ENCODE measurements at regions of chr7 and their contacts with region 1.

Region 1: DNA sequence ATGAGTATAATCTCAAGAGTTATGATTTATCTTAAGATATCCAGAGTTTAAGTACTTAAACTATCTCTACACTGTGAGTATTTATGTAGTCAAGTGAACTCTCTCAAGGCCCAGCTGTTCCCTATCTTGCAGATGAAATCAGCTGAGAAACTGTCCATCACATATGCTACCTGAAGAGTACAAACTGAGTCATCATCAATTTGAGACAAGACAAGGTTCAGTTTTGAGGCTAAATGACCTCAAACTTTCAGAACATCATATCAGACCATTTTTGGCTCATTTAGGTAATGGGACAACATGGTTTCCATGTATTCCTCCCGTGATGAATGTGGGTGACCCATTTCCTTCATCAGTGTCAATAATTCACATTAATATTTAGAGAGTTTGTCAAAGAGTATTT is 53.1 kb upstream of the AUTS2 start:
- DNase-seq: no peak
- ATAC-seq: no peak

Region 2: DNA sequence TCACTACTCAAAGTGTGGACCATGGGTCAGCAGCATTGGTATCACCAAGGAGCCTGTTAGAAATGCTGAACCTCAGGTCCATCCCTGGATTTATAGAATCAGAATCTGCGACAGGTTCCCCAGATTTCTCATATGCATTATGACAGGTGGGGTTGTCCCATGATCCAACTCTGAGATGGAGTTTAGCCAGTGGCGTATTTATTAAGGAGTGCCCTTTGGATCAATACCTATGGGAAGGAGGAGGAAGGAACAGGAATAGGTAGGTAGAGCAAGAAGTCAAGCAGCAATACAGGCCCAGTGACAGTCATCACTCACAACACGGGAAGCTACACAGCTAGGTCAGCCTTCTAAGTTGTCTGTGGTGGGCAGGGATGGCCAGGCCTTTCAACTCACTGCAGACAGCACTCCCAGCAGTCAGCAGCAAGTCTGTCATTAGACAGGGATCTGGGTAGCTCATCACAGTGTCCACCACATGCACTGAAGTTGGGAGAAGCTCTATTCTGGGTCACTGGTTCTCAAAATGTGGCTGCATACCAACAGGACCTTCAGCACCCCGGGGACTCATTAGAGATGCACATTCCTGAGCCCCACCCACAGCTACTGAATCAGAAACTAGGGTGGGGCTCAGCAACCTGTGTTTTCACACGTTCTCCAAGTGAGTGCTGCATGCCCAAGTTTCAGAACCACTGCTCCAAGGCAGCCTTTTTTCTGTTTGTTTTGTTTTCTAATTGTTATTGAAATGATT is 1054.4 kb after region 1 on chr7:
- intact Hi-C with region 1: loop called (anchors 5 kb)
- DNase-seq: no peak
- ATAC-seq: no peak